ENCODE measurements at regions of chr10 and their contacts with region 1.

Region 1: DNA sequence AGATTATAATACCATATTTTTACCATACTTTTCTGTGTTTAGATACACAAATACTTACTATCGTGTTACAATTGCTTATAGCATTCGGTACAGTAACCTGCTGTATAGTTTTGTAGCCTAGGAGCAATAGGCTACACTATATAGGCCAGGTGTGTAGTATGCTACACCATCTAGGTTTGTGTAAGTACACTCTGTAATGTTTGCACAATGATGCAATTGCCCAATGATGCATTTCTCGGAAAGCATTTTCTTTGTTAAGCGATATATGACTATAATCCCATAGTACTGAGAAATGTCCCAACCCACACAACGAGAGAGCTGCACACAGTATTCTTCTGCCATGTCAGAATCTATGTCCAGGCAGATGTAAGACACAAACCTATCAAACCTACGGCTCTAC is 160.0 kb downstream of the NEBL start:
- DNase-seq: no peak
- ATAC-seq: no peak
- H3K4me3 ChIP-seq: no peak overlapping the region
- H3K27ac ChIP-seq: no peak overlapping the region
- H3K4me1 ChIP-seq: no peaks in the 10 kb centered on the region
- H3K27me3 ChIP-seq: no peaks in the 10 kb centered on the region
- CTCF ChIP-seq: no peak
- EP300 ChIP-seq: no peak
- POLR2A ChIP-seq: no peak
- RAD21 ChIP-seq: no peak

Region 2: DNA sequence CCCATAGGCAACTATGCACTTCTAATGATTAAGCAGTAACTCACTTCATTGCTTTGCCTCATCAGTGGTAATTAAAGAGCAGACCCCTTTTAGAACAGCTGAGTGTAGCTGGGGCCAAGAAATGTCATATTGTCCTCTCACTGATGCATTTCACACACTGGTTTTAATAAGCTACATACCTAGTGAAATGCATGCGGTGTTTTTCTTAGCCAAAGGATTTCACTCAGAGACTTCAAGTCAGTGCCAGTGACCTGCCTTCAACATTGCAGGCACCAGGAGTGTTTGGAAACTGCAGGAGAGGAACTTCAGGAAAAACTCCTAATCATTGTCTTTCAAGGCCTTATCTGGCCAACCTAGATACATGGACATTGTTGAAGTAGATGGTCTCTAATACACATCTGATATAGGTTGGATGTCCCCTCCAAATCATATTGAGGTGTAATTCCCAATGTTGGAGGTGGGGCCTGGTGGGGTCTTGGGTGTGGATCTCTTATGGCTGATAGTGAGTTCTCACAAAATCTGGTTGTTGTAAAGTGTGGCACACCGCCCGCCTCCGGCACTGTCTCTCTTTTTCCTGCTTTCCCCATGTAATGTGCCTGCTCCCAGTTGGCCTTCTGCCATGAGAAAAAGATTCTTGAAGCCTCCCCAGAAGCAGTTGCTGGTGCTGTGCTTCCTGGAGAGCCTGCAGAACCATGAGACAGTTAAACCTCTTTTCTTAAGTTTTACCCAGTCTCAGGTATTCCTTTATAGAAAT is 1173.5 kb before region 1 on chr10:
- CTCF ChIA-PET with region 1: no interaction called
- POLR2A ChIA-PET with region 1: no interaction called
- in situ Hi-C with region 1: loop called (anchors 10 kb)
- intact Hi-C with region 1: no loop called
- DNase-seq: no peak
- ATAC-seq: no peak
- H3K4me3 ChIP-seq: no peak overlapping the region
- H3K27ac ChIP-seq: no peak overlapping the region
- H3K4me1 ChIP-seq: no peaks in the 10 kb centered on the region
- H3K27me3 ChIP-seq: no peaks in the 10 kb centered on the region
- CTCF ChIP-seq: no peak
- EP300 ChIP-seq: no peak
- POLR2A ChIP-seq: no peak
- RAD21 ChIP-seq: no peak

Region 3: DNA sequence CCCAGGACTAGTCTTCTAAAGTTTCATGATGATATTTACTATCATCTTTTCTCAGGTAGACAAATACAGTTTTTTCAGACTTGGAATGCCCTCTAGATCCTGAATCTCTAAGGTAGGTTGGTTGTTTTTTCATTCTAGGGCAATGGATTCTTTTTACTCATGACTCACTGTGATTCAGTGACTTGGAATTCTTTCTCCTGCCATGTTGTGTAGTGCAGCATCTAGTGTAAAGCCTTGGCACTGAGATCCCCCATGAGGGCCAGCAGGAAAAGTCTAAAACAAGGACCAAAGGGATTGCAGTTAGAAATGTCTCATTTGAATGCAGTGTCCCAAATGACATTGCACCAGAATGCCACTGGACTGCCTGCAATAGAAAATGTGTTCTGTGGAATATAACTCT is 270.4 kb before region 1 on chr10:
- CTCF ChIA-PET with region 1: no interaction called
- POLR2A ChIA-PET with region 1: no interaction called
- in situ Hi-C with region 1: no loop called
- intact Hi-C with region 1: no loop called
- DNase-seq: no peak
- ATAC-seq: no peak
- H3K4me3 ChIP-seq: no peak overlapping the region
- H3K27ac ChIP-seq: no peak overlapping the region
- H3K4me1 ChIP-seq: no peaks in the 10 kb centered on the region
- H3K27me3 ChIP-seq: no peaks in the 10 kb centered on the region
- CTCF ChIP-seq: no peak
- EP300 ChIP-seq: no peak
- POLR2A ChIP-seq: no peak
- RAD21 ChIP-seq: no peak